H1 (cell line): ENCODE measurements at regions of chr6 and their contacts with region 1.

Region 1: GRCh38 chr6:47047479-47048407 is 5.6 kb upstream of the ADGRF1 start:
- DNase-seq: peak; percentile 56 to 59
- H3K4me3 ChIP-seq: no peak overlapping the region
- H3K27ac ChIP-seq: no peak overlapping the region
- H3K4me1 ChIP-seq: no peaks in the 10 kb centered on the region
- H3K27me3 ChIP-seq: no peaks in the 10 kb centered on the region
- CTCF ChIP-seq: peak in 2 of 3 experiments; percentile 71 to 84; a peak in 3 of 4 replicates
- EP300 ChIP-seq: no peak
- POLR2A ChIP-seq: no peak
- RAD21 ChIP-seq: peak; percentile 91 to 92

Region 2: DNA sequence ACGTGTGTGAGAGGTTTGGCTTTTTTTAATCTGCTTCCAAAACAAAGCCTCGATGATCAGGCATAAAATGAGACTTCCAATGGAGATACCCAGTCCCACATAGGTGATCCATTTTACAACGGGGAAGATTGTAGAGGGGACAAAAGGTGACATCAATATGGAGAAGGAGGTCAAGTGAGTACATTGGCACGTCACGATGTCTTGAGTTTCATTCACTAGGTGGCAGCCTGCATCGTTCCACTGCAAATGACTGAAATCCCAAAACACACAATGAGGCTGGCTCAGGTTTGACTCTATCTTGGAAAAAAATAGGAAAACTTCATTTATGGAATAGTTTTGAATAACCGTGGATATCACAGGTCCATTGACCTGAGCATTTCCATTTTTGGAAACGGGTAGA is 38.2 kb before region 1 on chr6:
- CTCF ChIA-PET with region 1: interaction called, 10 read pairs
- POLR2A ChIA-PET with region 1: no interaction called
- DNase-seq: no peak
- H3K4me3 ChIP-seq: no peak overlapping the region
- H3K27ac ChIP-seq: no peak overlapping the region
- H3K4me1 ChIP-seq: no peaks in the 10 kb centered on the region
- H3K27me3 ChIP-seq: no peaks in the 10 kb centered on the region
- CTCF ChIP-seq: peak in 2 of 3 experiments; percentile 6 to 30; a peak in 2 of 4 replicates
- EP300 ChIP-seq: no peak
- POLR2A ChIP-seq: no peak
- RAD21 ChIP-seq: peak in 1 of 2 experiments; percentile 31; a peak in 3 of 4 replicates

Region 3: GRCh38 chr6:47023573-47023972 is 24.2 kb before region 1 on chr6:
- CTCF ChIA-PET with region 1: interaction called, 10 read pairs
- POLR2A ChIA-PET with region 1: no interaction called
- DNase-seq: no peak
- H3K4me3 ChIP-seq: no peak overlapping the region
- H3K27ac ChIP-seq: no peak overlapping the region
- H3K4me1 ChIP-seq: no peaks in the 10 kb centered on the region
- H3K27me3 ChIP-seq: peaks cover 0 to 1% (median 0%) of the 10 kb centered on the region in 4 experiments; a peak in 1 of 7 replicates
- CTCF ChIP-seq: no peak
- EP300 ChIP-seq: no peak
- POLR2A ChIP-seq: no peak
- RAD21 ChIP-seq: no peak

Region 4: DNA sequence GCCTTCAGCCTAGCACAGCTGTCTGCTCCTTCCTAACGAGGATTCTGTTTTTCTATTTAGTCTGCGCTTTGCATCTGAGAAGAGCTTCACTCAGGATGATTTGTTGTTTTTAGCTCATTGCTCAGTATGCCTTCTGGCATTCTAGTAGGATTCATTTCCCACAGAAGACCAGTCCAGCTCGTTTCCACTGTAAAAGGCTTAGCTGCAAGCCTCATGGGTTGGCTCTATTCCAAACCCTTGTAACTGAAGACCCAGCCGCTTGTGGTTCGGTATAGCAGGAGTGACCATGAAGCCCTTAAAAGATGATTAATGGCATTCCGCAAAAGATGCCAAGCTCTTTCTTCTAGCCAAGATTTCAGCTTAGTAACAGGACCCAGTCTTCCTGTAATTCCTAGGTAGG is 12.8 kb before region 1 on chr6:
- CTCF ChIA-PET with region 1: interaction called, 23 read pairs
- POLR2A ChIA-PET with region 1: no interaction called
- DNase-seq: no peak
- H3K4me3 ChIP-seq: no peak overlapping the region; a peak in 1 of 8 replicates
- H3K27ac ChIP-seq: no peak overlapping the region
- H3K4me1 ChIP-seq: peaks cover 0 to 4% (median under 1%) of the 10 kb centered on the region in 4 experiments; a peak in 2 of 7 replicates
- H3K27me3 ChIP-seq: no peaks in the 10 kb centered on the region
- CTCF ChIP-seq: no peak
- EP300 ChIP-seq: no peak
- POLR2A ChIP-seq: no peak
- RAD21 ChIP-seq: no peak